Cardiac septum (tissue), 1 donor: ENCODE measurements at regions of chr4 and their contacts with region 1.

Region 1: GRCh38 chr4:71229477-71230270 is 109.1 kb upstream of the SLC4A4 start:
- DNase-seq: no peak

Region 2: GRCh38 chr4:71184195-71184781 is 45.4 kb before region 1 on chr4:
- intact Hi-C with region 1: loop called (anchors 2 kb)
- DNase-seq: no peak

Region 3: DNA sequence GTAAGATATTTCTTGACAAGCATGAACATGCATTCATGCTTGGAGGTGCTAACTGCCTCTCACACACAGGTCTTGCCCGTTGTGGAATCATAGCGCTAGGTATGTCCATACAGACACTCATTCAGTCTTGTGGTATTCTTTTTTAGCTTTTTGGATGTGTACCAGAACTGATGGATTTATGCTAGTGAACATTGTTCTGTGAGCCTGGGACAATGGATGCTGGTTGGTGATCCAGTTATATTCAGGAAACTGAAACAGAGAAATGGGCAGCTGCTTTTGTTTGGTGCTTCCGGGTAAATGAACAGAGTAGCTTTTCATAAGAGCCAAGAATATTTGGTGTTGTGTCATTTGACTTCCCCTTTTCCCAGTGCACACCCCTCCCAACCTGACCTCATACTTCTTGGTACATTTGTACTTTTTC is 30.2 kb after region 1 on chr4:
- intact Hi-C with region 1: loop called (anchors 1 kb)
- DNase-seq: no peak

Region 4: DNA sequence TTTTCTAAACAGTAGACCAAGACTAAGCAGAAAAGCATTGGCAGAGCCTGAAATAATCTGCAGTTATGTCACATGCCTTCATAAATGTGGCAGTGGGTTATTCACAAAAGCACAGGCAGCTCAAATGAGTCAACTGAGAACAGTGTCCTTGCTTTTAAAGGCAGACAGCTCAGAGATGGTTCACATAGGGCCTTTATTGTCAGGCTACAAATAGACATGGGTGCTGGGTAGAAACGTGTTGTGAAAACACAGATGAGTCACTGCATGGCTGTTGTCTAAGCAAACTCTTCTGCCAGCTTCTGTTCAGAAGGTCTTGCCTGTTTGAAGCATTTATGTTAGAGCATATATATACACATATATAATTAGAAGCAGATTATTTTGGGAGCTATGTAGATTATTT is 227.2 kb after region 1 on chr4:
- intact Hi-C with region 1: loop called (anchors 10 kb)
- DNase-seq: no peak

Region 5: GRCh38 chr4:71553605-71554004 is 323.9 kb after region 1 on chr4:
- intact Hi-C with region 1: loop called (anchors 5 kb)
- DNase-seq: no peak